GM12878 (cell line): ENCODE measurements at regions of chr6 and their contacts with region 1.

Region 1: DNA sequence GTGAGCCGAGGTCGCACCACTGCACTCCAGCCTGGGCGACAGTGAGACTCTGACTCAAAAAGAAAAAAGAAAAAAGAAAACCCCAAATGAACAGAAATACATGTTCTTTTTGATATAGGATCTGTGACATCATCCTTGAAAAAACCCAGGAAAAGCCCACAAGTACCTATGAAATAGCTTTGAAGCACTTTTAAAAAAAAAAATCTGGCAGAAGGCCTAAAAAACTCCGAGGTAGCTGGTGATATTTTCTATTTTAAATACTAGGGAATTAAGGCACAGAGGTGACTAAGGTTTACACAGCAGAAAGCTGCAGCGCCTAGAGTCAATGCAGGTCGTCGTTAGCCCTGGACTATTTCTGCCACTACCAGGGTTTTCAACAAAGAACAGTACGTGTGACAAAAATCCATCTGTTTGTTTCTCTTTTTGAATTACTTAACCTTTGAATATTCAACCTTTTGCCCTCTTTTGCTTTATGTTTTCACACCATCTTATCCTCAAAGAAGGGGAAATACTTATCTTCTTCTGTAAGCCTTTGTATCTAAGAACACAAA is 39.4 kb upstream of the EEF1A1 start:
- DNase-seq: peak; percentile 30
- ATAC-seq: peak; percentile 65
- H3K4me3 ChIP-seq: peak overlapping the region; percentile 49; the same call in 1 of the 2 replicates
- H3K27ac ChIP-seq: peak overlapping the region; percentile 80
- H3K4me1 ChIP-seq: peaks cover 29% of the 10 kb centered on the region
- H3K27me3 ChIP-seq: no peaks in the 10 kb centered on the region
- CTCF ChIP-seq: no peak
- EP300 ChIP-seq: no peak
- POLR2A ChIP-seq: no peak
- RAD21 ChIP-seq: no peak

Region 2: GRCh38 chr6:73542882-73543281 is 17.4 kb before region 1 on chr6:
- CTCF ChIA-PET with region 1: interaction called, 18 read pairs
- POLR2A ChIA-PET with region 1: interaction called, 10 read pairs
- RAD21 ChIA-PET with region 1: interaction called, 9 read pairs
- SMC1A ChIA-PET with region 1: interaction called, 21 read pairs
- in situ Hi-C with region 1: no loop called
- intact Hi-C with region 1: no loop called
- DNase-seq: no peak
- ATAC-seq: no peak
- H3K4me3 ChIP-seq: no peak overlapping the region
- H3K27ac ChIP-seq: no peak overlapping the region
- H3K4me1 ChIP-seq: no peaks in the 10 kb centered on the region
- H3K27me3 ChIP-seq: no peaks in the 10 kb centered on the region
- CTCF ChIP-seq: no peak
- EP300 ChIP-seq: no peak
- POLR2A ChIP-seq: no peak
- RAD21 ChIP-seq: no peak

Region 3: GRCh38 chr6:73548458-73549446 is 11.5 kb before region 1 on chr6:
- CTCF ChIA-PET with region 1: interaction called, 18 read pairs
- POLR2A ChIA-PET with region 1: interaction called, 10 read pairs
- RAD21 ChIA-PET with region 1: interaction called, 9 read pairs
- SMC1A ChIA-PET with region 1: interaction called, 21 read pairs
- in situ Hi-C with region 1: no loop called
- intact Hi-C with region 1: no loop called
- DNase-seq: no peak
- ATAC-seq: no peak
- H3K4me3 ChIP-seq: no peak overlapping the region
- H3K27ac ChIP-seq: no peak overlapping the region
- H3K4me1 ChIP-seq: no peaks in the 10 kb centered on the region
- H3K27me3 ChIP-seq: no peaks in the 10 kb centered on the region
- CTCF ChIP-seq: no peak
- EP300 ChIP-seq: no peak
- POLR2A ChIP-seq: no peak
- RAD21 ChIP-seq: no peak

Region 4: GRCh38 chr6:73580247-73581149 is 20.2 kb after region 1 on chr6:
- CTCF ChIA-PET with region 1: interaction called, 18 read pairs
- POLR2A ChIA-PET with region 1: interaction called, 15 read pairs
- RAD21 ChIA-PET with region 1: interaction called, 31 read pairs
- SMC1A ChIA-PET with region 1: interaction called, 21 read pairs
- in situ Hi-C with region 1: no loop called
- intact Hi-C with region 1: loop called (anchors 1 kb)
- DNase-seq: peak; percentile 61
- ATAC-seq: peak; percentile 92
- H3K4me3 ChIP-seq: peak overlapping the region; percentile 34; the same call in 1 of the 2 replicates
- H3K27ac ChIP-seq: peak overlapping the region; percentile 96
- H3K4me1 ChIP-seq: peaks cover 20% of the 10 kb centered on the region
- H3K27me3 ChIP-seq: no peaks in the 10 kb centered on the region
- CTCF ChIP-seq: peak; percentile 42 to 53 (median 46); a peak in 5 of 6 replicates
- EP300 ChIP-seq: no peak
- POLR2A ChIP-seq: peak; percentile 71
- RAD21 ChIP-seq: 0 out of 2 replicates have a peak, but pooled peaks have one; percentile 36

Region 5: GRCh38 chr6:73585566-73586415 is 25.5 kb after region 1 on chr6:
- CTCF ChIA-PET with region 1: interaction called, 18 read pairs
- POLR2A ChIA-PET with region 1: interaction called, 15 read pairs
- RAD21 ChIA-PET with region 1: interaction called, 31 read pairs
- SMC1A ChIA-PET with region 1: interaction called, 21 read pairs
- in situ Hi-C with region 1: no loop called
- intact Hi-C with region 1: loop called (anchors 1 kb)
- DNase-seq: peak; percentile 66
- ATAC-seq: peak; percentile 87
- H3K4me3 ChIP-seq: peak overlapping the region; percentile 29
- H3K27ac ChIP-seq: peak overlapping the region; percentile 95
- H3K4me1 ChIP-seq: peaks cover 18% of the 10 kb centered on the region
- H3K27me3 ChIP-seq: no peaks in the 10 kb centered on the region
- CTCF ChIP-seq: no peak
- EP300 ChIP-seq: peak in 1 of 2 experiments; percentile 39; a peak in 1 of 4 replicates
- POLR2A ChIP-seq: no peak
- RAD21 ChIP-seq: no peak

Region 6: DNA sequence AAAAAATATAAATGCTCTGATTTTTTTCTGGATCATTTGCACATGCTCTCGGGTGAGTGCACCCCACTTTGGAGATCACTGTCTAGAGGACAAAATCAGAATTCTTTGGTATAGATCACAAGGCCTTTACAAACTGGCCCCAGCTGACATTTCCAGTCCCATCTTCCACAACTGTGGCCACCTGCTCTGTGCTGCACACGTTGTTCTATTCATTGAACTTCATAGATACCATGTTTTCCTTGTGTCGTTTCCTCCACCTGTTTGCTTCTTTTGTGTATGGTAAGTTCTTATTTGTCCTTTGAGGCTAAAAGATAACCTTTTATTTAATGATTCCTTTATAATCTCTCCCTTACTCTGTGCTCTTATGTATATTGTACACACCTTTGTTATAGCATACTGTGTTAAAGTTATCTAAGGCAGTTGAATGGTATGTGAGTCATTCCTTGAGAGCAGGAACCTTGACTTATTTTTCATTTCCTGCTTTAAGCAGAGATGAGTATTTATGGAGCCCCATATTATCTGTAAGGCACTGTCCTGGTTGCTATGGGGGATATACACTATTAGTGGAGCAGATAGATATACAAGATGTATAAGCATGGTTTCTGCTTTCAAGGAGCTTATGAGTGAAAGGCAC is 105.5 kb after region 1 on chr6:
- CTCF ChIA-PET with region 1: no interaction called
- POLR2A ChIA-PET with region 1: no interaction called
- RAD21 ChIA-PET with region 1: no interaction called
- SMC1A ChIA-PET with region 1: no interaction called
- in situ Hi-C with region 1: no loop called
- intact Hi-C with region 1: no loop called
- DNase-seq: no peak
- ATAC-seq: peak; percentile 71
- H3K4me3 ChIP-seq: no peak overlapping the region
- H3K27ac ChIP-seq: no peak overlapping the region
- H3K4me1 ChIP-seq: no peaks in the 10 kb centered on the region
- H3K27me3 ChIP-seq: no peaks in the 10 kb centered on the region
- CTCF ChIP-seq: no peak
- EP300 ChIP-seq: no peak
- POLR2A ChIP-seq: no peak
- RAD21 ChIP-seq: no peak

Region 7: DNA sequence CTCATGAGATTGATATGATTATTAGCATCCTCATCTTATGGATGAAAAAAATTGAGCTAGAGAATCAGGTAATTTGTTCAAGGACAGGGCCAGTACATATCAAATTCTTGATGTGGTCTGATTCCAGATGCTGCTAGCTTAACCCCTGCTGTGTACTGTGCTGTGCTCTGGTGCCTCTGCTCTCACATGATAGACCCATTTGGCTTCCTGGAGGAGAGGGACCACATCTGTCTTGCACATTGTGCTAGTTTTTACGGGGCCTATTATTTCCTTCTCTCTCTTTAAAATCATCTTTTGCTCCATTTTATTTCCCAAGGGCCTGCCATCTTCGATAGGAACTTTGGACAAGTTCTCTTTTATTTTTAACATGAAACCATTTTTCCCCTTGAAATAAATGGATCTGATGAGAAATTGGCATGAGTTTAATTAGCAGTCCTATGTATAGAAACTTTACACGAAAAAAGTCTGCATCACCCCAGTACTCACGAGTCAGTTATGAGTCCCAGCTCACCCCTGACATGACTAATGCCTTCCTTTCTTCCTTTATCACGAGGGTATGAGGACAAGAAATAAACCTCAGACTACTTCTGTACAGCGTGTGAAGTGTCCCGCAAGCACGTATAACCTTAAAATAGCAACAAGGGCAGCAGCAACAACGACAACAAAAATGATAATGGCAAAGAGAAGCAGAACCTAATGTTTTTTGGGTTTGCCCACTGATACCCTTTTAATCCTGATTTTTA is 162.2 kb after region 1 on chr6:
- CTCF ChIA-PET with region 1: no interaction called
- POLR2A ChIA-PET with region 1: no interaction called
- RAD21 ChIA-PET with region 1: no interaction called
- SMC1A ChIA-PET with region 1: no interaction called
- in situ Hi-C with region 1: no loop called
- intact Hi-C with region 1: no loop called
- DNase-seq: peak; percentile 46
- ATAC-seq: peak; percentile 85
- H3K4me3 ChIP-seq: no peak overlapping the region
- H3K27ac ChIP-seq: no peak overlapping the region; the same call in 1 of the 2 replicates
- H3K4me1 ChIP-seq: peaks cover 3% of the 10 kb centered on the region
- H3K27me3 ChIP-seq: no peaks in the 10 kb centered on the region
- CTCF ChIP-seq: no peak
- EP300 ChIP-seq: peak; percentile 53 to 73; a peak in 3 of 4 replicates
- POLR2A ChIP-seq: no peak
- RAD21 ChIP-seq: no peak